MCF 10A (cell line): ENCODE measurements at regions of chr5 and their contacts with region 1.

Region 1: GRCh38 chr5:171907725-171908343 is 98.6 kb downstream of the FBXW11 start:
- DNase-seq: peak; percentile 79
- H3K4me3 Mint-ChIP-seq: no peak overlapping the region
- H3K27ac Mint-ChIP-seq: no peak overlapping the region
- H3K4me1 Mint-ChIP-seq: peaks cover 10% of the 10 kb centered on the region
- H3K27me3 Mint-ChIP-seq: no peaks in the 10 kb centered on the region
- CTCF ChIP-seq: peak; percentile 92

Region 2: GRCh38 chr5:171647032-171647903 is 260.6 kb before region 1 on chr5:
- CTCF ChIA-PET with region 1: no interaction called
- POLR2A ChIA-PET with region 1: no interaction called
- intact Hi-C with region 1: loop called (anchors 10 kb)
- DNase-seq: peak; percentile 78
- H3K4me3 Mint-ChIP-seq: no peak overlapping the region
- H3K27ac Mint-ChIP-seq: no peak overlapping the region
- H3K4me1 Mint-ChIP-seq: peaks cover 9% of the 10 kb centered on the region
- H3K27me3 Mint-ChIP-seq: peaks cover 17% of the 10 kb centered on the region
- CTCF ChIP-seq: peak; percentile 12

Region 3: GRCh38 chr5:171701100-171701541 is 206.7 kb before region 1 on chr5:
- CTCF ChIA-PET with region 1: no interaction called
- POLR2A ChIA-PET with region 1: no interaction called
- intact Hi-C with region 1: no loop called
- DNase-seq: no peak
- H3K4me3 Mint-ChIP-seq: no peak overlapping the region
- H3K27ac Mint-ChIP-seq: no peak overlapping the region
- H3K4me1 Mint-ChIP-seq: no peaks in the 10 kb centered on the region
- H3K27me3 Mint-ChIP-seq: peaks cover 22% of the 10 kb centered on the region
- CTCF ChIP-seq: no peak

Region 4: GRCh38 chr5:171714261-171714660 is 193.6 kb before region 1 on chr5:
- CTCF ChIA-PET with region 1: no interaction called
- POLR2A ChIA-PET with region 1: no interaction called
- intact Hi-C with region 1: no loop called
- DNase-seq: no peak
- H3K4me3 Mint-ChIP-seq: no peak overlapping the region
- H3K27ac Mint-ChIP-seq: no peak overlapping the region
- H3K4me1 Mint-ChIP-seq: no peaks in the 10 kb centered on the region
- H3K27me3 Mint-ChIP-seq: peaks cover 11% of the 10 kb centered on the region
- CTCF ChIP-seq: no peak

Region 5: DNA sequence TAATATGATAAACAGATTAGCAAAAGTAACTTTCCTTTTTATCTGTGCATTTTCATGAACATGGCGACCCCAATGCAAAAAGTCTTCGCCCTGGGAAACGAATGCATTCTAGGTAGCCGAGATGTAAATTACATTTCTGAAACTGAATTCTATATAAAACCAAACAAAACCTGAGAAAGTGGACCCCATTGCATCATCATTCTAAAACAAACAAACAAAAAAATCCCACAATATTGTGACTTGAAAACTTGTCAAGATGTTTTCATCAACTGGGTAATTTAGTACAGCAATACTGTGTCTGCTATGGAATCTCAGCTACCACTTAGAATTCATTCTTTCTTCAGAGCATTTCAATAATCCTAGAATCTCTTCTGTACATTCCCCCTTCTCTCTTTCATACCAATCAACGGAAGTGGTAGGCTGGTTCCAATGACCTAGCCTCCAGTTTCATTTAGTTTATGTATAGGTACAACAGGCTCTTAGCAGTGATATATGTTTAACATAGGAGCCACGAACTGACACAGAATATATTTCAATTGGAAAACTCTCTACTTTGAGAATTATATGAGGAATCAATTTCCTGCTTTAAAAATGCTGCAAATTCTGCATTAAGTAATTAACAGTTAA is 13.0 kb after region 1 on chr5:
- CTCF ChIA-PET with region 1: interaction called, 20 read pairs
- POLR2A ChIA-PET with region 1: no interaction called
- intact Hi-C with region 1: no loop called
- DNase-seq: no peak
- H3K4me3 Mint-ChIP-seq: no peak overlapping the region
- H3K27ac Mint-ChIP-seq: no peak overlapping the region
- H3K4me1 Mint-ChIP-seq: peaks cover 14% of the 10 kb centered on the region
- H3K27me3 Mint-ChIP-seq: no peaks in the 10 kb centered on the region
- CTCF ChIP-seq: no peak

Region 6: DNA sequence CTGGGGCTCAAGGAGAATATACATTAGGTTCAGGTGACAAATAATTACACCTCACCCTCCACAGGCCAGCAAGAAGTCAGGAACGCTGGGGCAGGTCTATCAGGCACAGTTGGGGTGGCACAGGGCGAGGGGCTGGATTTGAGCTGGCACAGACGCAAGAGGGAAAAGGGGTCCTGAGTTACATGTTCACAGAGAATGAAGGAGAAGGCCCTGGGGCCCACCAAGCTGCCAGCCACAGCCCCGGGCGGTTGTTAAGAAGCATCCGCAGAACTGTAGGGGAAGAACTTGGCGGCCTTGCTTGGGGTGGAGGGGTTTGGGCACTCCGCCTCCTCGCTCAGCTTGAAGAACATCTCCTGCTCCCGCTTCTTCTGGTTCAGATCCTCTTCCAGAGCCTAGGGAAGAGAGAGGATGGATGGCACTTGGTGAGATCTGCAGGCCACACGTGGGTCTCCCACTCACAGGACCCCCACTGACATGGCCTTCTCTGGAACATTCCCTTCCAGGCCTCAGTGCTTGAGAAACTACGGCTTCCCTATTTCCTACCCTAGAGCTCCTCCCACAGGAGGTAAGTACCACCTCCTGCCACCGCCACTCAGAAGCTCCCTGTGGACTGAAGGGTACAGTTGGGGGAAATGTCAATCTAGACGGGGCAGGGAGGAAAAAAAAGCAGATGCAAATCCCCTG is 136.9 kb after region 1 on chr5:
- CTCF ChIA-PET with region 1: interaction called, 124 read pairs
- POLR2A ChIA-PET with region 1: interaction called, 6 read pairs
- intact Hi-C with region 1: loop called (anchors 1 kb)
- DNase-seq: no peak
- H3K4me3 Mint-ChIP-seq: no peak overlapping the region
- H3K27ac Mint-ChIP-seq: peak overlapping the region; percentile 52
- H3K4me1 Mint-ChIP-seq: peaks cover 6% of the 10 kb centered on the region
- H3K27me3 Mint-ChIP-seq: no peaks in the 10 kb centered on the region
- CTCF ChIP-seq: no peak

Region 7: GRCh38 chr5:172065501-172065990 is 157.7 kb after region 1 on chr5:
- CTCF ChIA-PET with region 1: interaction called, 118 read pairs
- POLR2A ChIA-PET with region 1: no interaction called
- intact Hi-C with region 1: no loop called
- DNase-seq: peak; percentile 47
- H3K4me3 Mint-ChIP-seq: no peak overlapping the region
- H3K27ac Mint-ChIP-seq: peak overlapping the region; percentile 69
- H3K4me1 Mint-ChIP-seq: no peaks in the 10 kb centered on the region
- H3K27me3 Mint-ChIP-seq: no peaks in the 10 kb centered on the region
- CTCF ChIP-seq: no peak

Region 8: DNA sequence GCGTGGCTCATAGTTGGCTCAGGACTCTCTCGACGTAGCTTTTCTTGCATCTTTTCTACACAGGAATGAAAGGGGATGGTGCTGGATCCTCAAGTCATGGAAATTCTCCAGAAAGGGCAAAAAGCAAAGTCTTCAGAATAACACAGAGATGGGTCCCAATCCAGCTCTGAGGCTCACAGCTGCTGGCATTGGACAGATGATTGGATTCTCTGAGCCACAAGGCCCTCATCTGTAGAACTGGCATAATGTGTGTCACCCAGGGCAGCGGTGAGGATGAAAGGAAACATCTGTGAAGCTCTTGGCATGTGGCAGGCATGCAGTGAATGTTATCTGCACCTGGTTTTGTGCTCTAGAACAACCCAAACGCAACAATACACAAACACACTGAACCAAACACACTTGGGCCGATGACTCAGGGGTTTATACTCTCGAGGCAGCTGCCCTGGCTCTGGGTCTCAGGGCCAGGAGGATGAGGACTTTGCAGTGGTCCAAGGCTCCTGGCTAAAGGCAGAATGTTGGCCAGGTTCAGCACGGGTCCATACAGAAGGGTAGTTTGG is 439.7 kb after region 1 on chr5:
- CTCF ChIA-PET with region 1: no interaction called
- POLR2A ChIA-PET with region 1: no interaction called
- intact Hi-C with region 1: no loop called
- DNase-seq: no peak
- H3K4me3 Mint-ChIP-seq: no peak overlapping the region
- H3K27ac Mint-ChIP-seq: no peak overlapping the region
- H3K4me1 Mint-ChIP-seq: peaks cover 7% of the 10 kb centered on the region
- H3K27me3 Mint-ChIP-seq: no peaks in the 10 kb centered on the region
- CTCF ChIP-seq: no peak

Region 9: GRCh38 chr5:172420240-172420943 is 512.6 kb after region 1 on chr5:
- CTCF ChIA-PET with region 1: no interaction called
- POLR2A ChIA-PET with region 1: no interaction called
- intact Hi-C with region 1: no loop called
- DNase-seq: peak; percentile 100
- H3K4me3 Mint-ChIP-seq: peak overlapping the region; percentile 73
- H3K27ac Mint-ChIP-seq: peak overlapping the region; percentile 80
- H3K4me1 Mint-ChIP-seq: peaks cover 50% of the 10 kb centered on the region
- H3K27me3 Mint-ChIP-seq: no peaks in the 10 kb centered on the region
- CTCF ChIP-seq: no peak